HepG2 (cell line): ENCODE measurements at regions of chr6 and their contacts with region 1.

Region 1: DNA sequence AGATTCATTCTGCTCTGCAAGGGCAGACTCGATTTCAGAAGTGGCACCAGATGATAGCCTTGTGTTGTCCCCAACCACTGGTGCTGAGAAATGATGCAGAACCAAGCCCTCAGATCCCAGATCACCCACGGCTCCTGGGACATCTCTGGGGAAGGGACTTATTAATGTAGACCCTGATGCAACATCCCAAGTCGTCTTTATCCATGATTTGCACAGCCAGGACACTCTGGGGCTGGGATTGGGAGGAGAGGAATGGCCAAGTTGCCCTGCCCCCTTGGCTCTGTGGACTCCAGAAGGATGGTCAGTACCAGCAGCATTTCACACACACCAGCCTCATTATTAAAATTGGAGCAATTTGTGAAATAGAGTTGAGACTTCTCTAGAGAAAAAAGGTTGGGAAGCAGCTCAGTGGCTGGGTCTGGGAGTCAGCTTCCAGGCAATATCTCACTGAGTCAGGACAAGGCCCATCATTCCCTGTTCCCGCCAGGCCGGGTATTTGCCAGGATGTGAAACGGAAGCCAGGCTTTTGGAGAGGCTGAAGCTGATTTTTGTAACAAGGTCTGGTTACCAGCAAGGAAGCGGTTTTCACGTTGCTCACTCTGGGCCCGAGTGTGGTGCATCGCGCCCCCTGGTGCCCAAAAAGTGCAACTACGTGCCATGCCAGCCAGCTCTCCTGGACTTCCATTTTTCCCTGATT is 67.4 kb downstream of the ZBTB2 start:
- DNase-seq: peak; percentile 69
- ATAC-seq: peak; percentile 81
- H3K4me3 ChIP-seq: peak overlapping the region in 2 of 3 experiments; percentile 70 to 81; a peak in 3 of 6 replicates
- H3K27ac ChIP-seq: no peak overlapping the region
- H3K4me1 ChIP-seq: peaks cover 45% of the 10 kb centered on the region
- H3K27me3 ChIP-seq: no peaks in the 10 kb centered on the region; a peak in 1 of 5 replicates
- CTCF ChIP-seq: peak; percentile 100
- EP300 ChIP-seq: no peak
- POLR2A ChIP-seq: no peak
- RAD21 ChIP-seq: peak; percentile 99

Region 2: GRCh38 chr6:150891888-150892485 is 432.0 kb before region 1 on chr6:
- CTCF ChIA-PET with region 1: interaction called, 21 read pairs
- POLR2A ChIA-PET with region 1: interaction called, 6 read pairs
- in situ Hi-C with region 1: loop called (anchors 5 kb)
- intact Hi-C with region 1: loop called (anchors 1 kb)
- DNase-seq: peak; percentile 69
- ATAC-seq: peak; percentile 86
- H3K4me3 ChIP-seq: no peak overlapping the region
- H3K27ac ChIP-seq: no peak overlapping the region
- H3K4me1 ChIP-seq: no peaks in the 10 kb centered on the region
- H3K27me3 ChIP-seq: no peaks in the 10 kb centered on the region
- CTCF ChIP-seq: peak; percentile 92
- EP300 ChIP-seq: no peak
- POLR2A ChIP-seq: no peak
- RAD21 ChIP-seq: peak; percentile 76

Region 3: GRCh38 chr6:151067684-151068596 is 256.0 kb before region 1 on chr6:
- CTCF ChIA-PET with region 1: no interaction called
- POLR2A ChIA-PET with region 1: interaction called, 6 read pairs
- in situ Hi-C with region 1: no loop called
- intact Hi-C with region 1: loop called (anchors 2 kb)
- DNase-seq: peak; percentile 96
- ATAC-seq: peak; percentile 88
- H3K4me3 ChIP-seq: peak overlapping the region; percentile 2 to 45 (median 3); a peak in 3 of 6 replicates
- H3K27ac ChIP-seq: peak overlapping the region; percentile 83
- H3K4me1 ChIP-seq: peaks cover 58% of the 10 kb centered on the region
- H3K27me3 ChIP-seq: no peaks in the 10 kb centered on the region
- CTCF ChIP-seq: no peak
- EP300 ChIP-seq: peak; percentile 54 to 90; a peak in 2 of 4 replicates
- POLR2A ChIP-seq: 0 out of 4 replicates have a peak, but pooled peaks of 1 of the 2 experiments have one; percentile 19
- RAD21 ChIP-seq: no peak

Region 4: DNA sequence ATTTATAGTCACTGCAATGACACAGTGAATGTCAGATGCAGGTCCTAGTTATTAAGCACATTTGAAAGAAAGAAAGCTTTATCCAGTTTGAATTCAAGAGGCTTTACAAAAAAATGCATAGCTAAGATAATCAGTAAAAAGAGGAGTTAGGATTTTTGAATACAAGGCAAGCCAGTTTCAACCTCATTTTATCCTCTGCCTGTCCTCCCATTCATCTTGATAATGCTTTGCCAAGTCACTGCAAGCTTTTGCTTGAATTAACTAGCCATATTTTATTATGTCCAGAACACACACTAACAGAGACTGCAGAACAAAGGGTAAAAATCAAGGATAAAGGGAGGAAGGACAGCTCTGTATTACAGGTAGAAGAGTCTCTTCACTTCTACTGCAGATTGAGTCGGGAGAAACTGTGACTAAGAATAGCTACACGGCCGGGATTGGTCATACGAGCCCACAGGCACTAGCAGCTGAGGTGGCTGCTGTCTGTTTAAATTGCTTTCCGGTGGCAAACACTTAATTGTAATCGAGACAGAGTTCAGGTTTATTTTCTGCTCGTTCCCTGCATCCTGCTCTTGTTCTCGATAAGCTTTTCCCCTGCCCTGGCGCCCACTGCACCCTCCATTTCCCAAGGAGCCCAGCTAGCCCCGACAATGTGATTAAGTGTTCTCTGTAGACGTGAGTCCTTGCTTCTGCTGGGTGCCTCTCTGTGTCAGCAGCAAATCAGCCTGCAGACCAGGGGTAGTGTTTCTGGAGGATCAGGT is 114.7 kb before region 1 on chr6:
- CTCF ChIA-PET with region 1: no interaction called
- POLR2A ChIA-PET with region 1: interaction called, 3 read pairs
- in situ Hi-C with region 1: no loop called
- intact Hi-C with region 1: loop called (anchors 10 kb)
- DNase-seq: peak; percentile 24
- ATAC-seq: peak; percentile 82
- H3K4me3 ChIP-seq: peak overlapping the region; percentile 36 to 62 (median 37)
- H3K27ac ChIP-seq: peak overlapping the region; percentile 14
- H3K4me1 ChIP-seq: peaks cover 45% of the 10 kb centered on the region
- H3K27me3 ChIP-seq: no peaks in the 10 kb centered on the region
- CTCF ChIP-seq: no peak
- EP300 ChIP-seq: no peak
- POLR2A ChIP-seq: no peak
- RAD21 ChIP-seq: no peak

Region 5: DNA sequence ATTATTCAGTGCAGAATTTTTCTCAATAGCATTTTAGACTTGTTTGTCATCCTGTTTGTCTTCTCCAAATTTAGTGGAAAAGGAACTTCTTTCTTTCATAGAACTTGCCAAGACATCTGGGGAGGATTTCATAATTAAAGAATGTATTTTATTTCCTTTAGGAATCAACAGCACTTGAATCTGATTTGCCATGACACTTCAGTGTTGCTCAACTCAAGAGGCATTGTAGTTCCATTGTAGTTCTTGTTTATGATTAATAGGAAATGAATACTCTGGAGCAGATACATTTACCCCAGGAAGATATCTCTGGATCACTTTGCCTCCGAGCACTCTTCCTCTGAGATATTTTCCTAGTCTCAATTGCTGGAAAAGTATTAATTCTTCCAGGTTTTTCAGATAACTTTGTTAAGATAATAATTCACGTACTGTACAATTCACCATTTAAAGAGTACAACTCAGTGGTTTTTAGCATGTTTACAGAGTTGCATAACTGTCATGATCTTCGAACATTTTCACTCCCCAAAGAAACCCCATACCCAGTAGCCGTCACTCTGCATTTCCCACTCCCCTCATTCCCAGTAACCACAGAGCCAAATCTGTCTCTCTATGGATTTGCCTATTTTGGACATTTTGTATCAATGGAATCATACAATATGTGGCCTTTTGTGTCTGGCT is 54.5 kb before region 1 on chr6:
- CTCF ChIA-PET with region 1: no interaction called
- POLR2A ChIA-PET with region 1: no interaction called
- in situ Hi-C with region 1: no loop called
- intact Hi-C with region 1: no loop called
- DNase-seq: no peak
- ATAC-seq: peak; percentile 49; the same call in 2 of the 3 replicates
- H3K4me3 ChIP-seq: no peak overlapping the region
- H3K27ac ChIP-seq: no peak overlapping the region
- H3K4me1 ChIP-seq: peaks cover 28% of the 10 kb centered on the region
- H3K27me3 ChIP-seq: no peaks in the 10 kb centered on the region
- CTCF ChIP-seq: no peak
- EP300 ChIP-seq: 0 out of 4 replicates have a peak, but pooled peaks of 1 of the 2 experiments have one; percentile 26
- POLR2A ChIP-seq: no peak
- RAD21 ChIP-seq: no peak

Region 6: GRCh38 chr6:151280859-151281258 is 43.1 kb before region 1 on chr6:
- CTCF ChIA-PET with region 1: no interaction called
- POLR2A ChIA-PET with region 1: no interaction called
- in situ Hi-C with region 1: no loop called
- intact Hi-C with region 1: no loop called
- DNase-seq: no peak
- ATAC-seq: no peak
- H3K4me3 ChIP-seq: no peak overlapping the region
- H3K27ac ChIP-seq: no peak overlapping the region
- H3K4me1 ChIP-seq: no peaks in the 10 kb centered on the region
- H3K27me3 ChIP-seq: no peaks in the 10 kb centered on the region; a peak in 1 of 5 replicates
- CTCF ChIP-seq: no peak
- EP300 ChIP-seq: no peak
- POLR2A ChIP-seq: no peak
- RAD21 ChIP-seq: no peak